Left cardiac atrium (tissue), 4 donors: ENCODE measurements at regions of chr6 and their contacts with region 1.

Region 1: GRCh38 chr6:44084231-44085014 is 42.8 kb downstream of the MRPL14 start:
- DNase-seq: peak; percentile 55
- ATAC-seq: peak; percentile 46 to 65

Region 2: GRCh38 chr6:43608310-43608763 is 476.1 kb before region 1 on chr6:
- intact Hi-C with region 1: loop called in 1 of 2 experiments (anchors 5 kb)
- DNase-seq: peak; percentile 59
- ATAC-seq: peak; percentile 50 to 64

Region 3: GRCh38 chr6:43723737-43724295 is 360.6 kb before region 1 on chr6:
- intact Hi-C with region 1: loop called (anchors 2 kb)
- DNase-seq: peak; percentile 62
- ATAC-seq: peak; percentile 80 to 85

Region 4: DNA sequence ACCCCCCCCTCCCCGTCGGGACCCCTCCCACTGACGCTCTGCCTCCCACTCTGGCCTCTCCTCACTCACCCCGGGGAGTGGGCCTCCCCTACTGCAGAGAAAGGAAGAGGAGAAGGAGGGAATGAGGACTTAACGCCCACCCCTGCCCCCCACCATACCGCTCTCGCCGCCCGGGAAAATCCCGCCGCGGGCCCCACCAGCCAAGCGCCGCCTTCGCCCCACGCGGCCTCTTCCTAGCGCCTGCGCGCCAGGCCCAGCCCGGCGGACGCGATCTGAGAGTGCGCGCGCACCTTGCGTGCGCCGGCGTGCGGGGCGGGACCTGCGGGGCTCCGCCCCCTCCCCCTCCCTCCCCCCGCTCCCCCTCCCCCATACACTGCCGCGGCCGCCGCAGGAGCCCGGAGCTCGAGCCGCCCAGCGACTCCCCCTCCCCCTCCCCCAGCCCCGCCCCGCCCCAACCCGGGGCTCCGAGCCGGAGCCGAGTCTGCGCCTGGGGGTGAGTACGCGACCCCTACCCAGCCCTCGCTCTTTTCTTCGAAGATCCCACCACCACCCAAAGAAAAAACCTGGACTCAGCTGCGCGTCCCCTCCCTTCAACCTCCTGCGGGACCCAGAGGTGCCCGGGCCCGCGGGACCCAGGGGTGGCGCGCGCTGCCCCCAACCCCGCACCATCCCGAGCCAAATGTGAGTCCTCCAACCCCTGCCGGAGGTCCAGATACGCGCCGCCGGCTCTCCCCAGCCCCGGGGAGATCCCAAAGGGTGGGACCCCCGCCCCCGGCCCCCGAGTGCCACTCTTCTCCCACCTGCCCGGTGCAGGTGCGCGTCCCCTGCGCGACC is 43.0 kb after region 1 on chr6 and contains the starts of genes MRPL14 and TMEM63B:
- intact Hi-C with region 1: no loop called
- DNase-seq: peak; percentile 92
- ATAC-seq: peak; percentile 96 to 97
- total RNA-seq, gene MRPL14: 32.4 to 41.2 TPM
- total RNA-seq, gene TMEM63B: 40.4 to 48.1 TPM